ENCODE measurements at regions of chr2 and their contacts with region 1.

Region 1: GRCh38 chr2:43207553-43208293 is 18.7 kb downstream of the ZFP36L2 start:
- DNase-seq: peak in 1 of 5 donors; percentile 33
- ATAC-seq: no peak
- H3K4me3 ChIP-seq: no peak overlapping the region
- H3K27ac ChIP-seq: no peak overlapping the region
- H3K4me1 ChIP-seq: peaks cover 0 to 22% (median 0%) of the 10 kb centered on the region in 12 donors
- H3K27me3 ChIP-seq: no peaks in the 10 kb centered on the region
- CTCF ChIP-seq: no peak
- POLR2A ChIP-seq: no peak

Region 2: DNA sequence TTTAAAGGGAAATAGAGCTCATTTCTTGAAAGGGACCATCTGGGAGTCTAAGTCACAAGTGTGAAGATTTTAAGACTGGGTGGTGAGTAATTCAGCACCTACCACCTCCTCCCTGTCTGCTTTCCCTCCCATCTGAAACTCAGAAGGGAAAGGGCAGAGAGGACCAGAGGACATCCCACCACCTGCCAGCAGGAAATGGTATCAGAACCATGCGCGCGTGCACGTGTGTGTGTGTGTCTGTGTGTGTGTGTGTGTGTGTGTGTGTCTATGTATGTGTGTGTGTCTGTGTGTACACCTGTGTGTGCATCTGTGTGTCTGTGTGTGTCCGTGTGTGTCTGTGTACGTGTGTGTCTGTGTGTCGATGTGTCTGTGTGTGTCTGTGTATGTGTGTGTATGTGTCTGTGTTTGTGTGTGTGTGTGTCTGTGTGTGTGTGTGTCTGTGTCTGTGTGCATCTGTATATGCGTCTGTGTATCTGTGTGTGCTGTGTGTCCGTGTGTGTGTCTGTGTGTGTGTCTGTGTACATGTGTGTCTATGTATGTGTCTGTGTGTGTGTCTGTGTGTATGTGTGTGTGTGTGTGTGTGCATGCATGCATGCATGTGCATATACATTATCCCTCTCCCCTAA is 58.1 kb before region 1 on chr2:
- intact Hi-C with region 1: loop called in 3 of 10 experiments (anchors 5 to 10 kb)
- DNase-seq: no peak
- ATAC-seq: no peak
- H3K4me3 ChIP-seq: no peak overlapping the region
- H3K27ac ChIP-seq: no peak overlapping the region
- H3K4me1 ChIP-seq: peaks cover 0 to 23% (median 10%) of the 10 kb centered on the region in 12 donors
- H3K27me3 ChIP-seq: no peaks in the 10 kb centered on the region
- CTCF ChIP-seq: no peak
- POLR2A ChIP-seq: no peak

Measured in heart left ventricle (tissue), 16 donors.